ENCODE measurements at regions of chr12 and their contacts with region 1.

Region 1: GRCh38 chr12:117119592-117120198 is 20.5 kb upstream of the TESC start:
- DNase-seq: peak in 1 of 7 donors; percentile 50
- H3K4me3 ChIP-seq: no peak overlapping the region
- H3K27ac ChIP-seq: no peak overlapping the region
- H3K4me1 ChIP-seq: peaks cover 12 to 24% of the 10 kb centered on the region in 2 donors
- H3K27me3 ChIP-seq: no peaks in the 10 kb centered on the region
- CTCF ChIP-seq: peak; percentile 51 to 77 (median 66)
- POLR2A ChIP-seq: no peak

Region 2: GRCh38 chr12:117025481-117026151 is 94.1 kb before region 1 on chr12:
- intact Hi-C with region 1: loop called in 1 of 2 experiments (anchors 2 kb)
- DNase-seq: peak; percentile 81 to 93 (median 92)
- H3K4me3 ChIP-seq: no peak overlapping the region
- H3K27ac ChIP-seq: peak overlapping the region in 3 of 5 donors; percentile 44 to 73 (median 56)
- H3K4me1 ChIP-seq: peaks cover 8 to 12% of the 10 kb centered on the region in 2 donors
- H3K27me3 ChIP-seq: no peaks in the 10 kb centered on the region
- CTCF ChIP-seq: peak; percentile 93 to 98 (median 96)
- POLR2A ChIP-seq: no peak

Measured in adrenal gland (tissue), 19 donors.